OCI-LY7 (cell line): ENCODE measurements at regions of chr6 and their contacts with region 1.

Region 1: DNA sequence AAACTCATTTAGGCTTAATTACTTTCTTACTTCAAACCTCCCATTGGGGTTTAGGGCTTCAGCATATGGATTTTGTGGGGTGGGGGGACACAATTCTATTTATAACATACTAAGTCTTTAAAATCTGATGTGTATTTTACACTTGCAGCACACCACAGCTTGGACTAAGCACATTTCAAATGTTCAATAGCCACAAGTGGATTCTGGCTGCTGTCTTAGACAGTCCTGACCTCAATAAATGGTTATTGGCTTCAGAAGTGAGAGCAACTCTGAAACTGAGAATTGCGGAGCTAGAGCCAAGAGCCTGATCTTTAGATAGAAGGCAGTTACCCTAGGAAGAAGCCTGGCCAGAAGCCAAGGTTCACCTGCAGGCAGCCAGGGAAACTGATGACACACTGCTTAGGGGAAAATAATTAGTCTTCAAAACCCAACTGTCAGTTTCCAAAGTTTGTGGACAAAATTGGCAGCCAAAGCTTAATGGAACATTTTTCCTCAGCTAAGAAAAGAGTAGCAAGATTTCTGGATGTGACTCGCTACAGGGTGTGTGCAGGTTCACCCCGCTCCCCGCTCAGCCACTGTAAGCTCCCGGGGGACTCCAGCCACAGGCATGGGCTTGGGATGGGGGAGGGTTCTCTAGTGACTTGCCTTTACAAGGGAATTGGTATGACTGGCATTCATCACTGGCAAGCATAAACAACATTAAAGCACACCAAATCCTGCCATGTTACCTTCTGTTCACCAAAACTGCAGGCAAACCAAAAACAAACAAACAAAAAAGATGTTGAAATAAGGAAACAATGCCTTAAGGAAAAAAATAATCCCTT is 219.8 kb downstream of the TFAP2A start:
- DNase-seq: no peak
- H3K4me3 ChIP-seq: no peak overlapping the region
- H3K27ac ChIP-seq: no peak overlapping the region
- H3K4me1 ChIP-seq: no peaks in the 10 kb centered on the region
- CTCF ChIP-seq: no peak

Region 2: GRCh38 chr6:9851541-9852380 is 343.3 kb before region 1 on chr6:
- CTCF ChIA-PET with region 1: no interaction called
- POLR2A ChIA-PET with region 1: no interaction called
- intact Hi-C with region 1: no loop called
- DNase-seq: no peak
- H3K4me3 ChIP-seq: no peak overlapping the region
- H3K27ac ChIP-seq: no peak overlapping the region
- H3K4me1 ChIP-seq: no peaks in the 10 kb centered on the region
- CTCF ChIP-seq: no peak

Region 3: GRCh38 chr6:10163200-10163962 is 31.6 kb before region 1 on chr6:
- CTCF ChIA-PET with region 1: no interaction called
- POLR2A ChIA-PET with region 1: interaction called, 3 read pairs
- intact Hi-C with region 1: loop called (anchors 1 kb)
- DNase-seq: no peak
- H3K4me3 ChIP-seq: no peak overlapping the region
- H3K27ac ChIP-seq: no peak overlapping the region
- H3K4me1 ChIP-seq: no peaks in the 10 kb centered on the region
- CTCF ChIP-seq: no peak

Region 4: GRCh38 chr6:10230559-10230958 is 35.5 kb after region 1 on chr6:
- CTCF ChIA-PET with region 1: no interaction called
- POLR2A ChIA-PET with region 1: no interaction called
- intact Hi-C with region 1: no loop called
- DNase-seq: no peak
- H3K4me3 ChIP-seq: no peak overlapping the region
- H3K27ac ChIP-seq: no peak overlapping the region
- H3K4me1 ChIP-seq: no peaks in the 10 kb centered on the region
- CTCF ChIP-seq: no peak